ENCODE measurements at regions of chr9 and their contacts with region 1.

Region 1: GRCh38 chr9:78035383-78035993 is 3.9 kb upstream of the GNAQ start:
- DNase-seq: peak; percentile 64
- H3K4me3 Mint-ChIP-seq: no peak overlapping the region
- H3K27ac Mint-ChIP-seq: no peak overlapping the region
- H3K4me1 Mint-ChIP-seq: peaks cover 31% of the 10 kb centered on the region
- H3K27me3 Mint-ChIP-seq: no peaks in the 10 kb centered on the region

Region 2: DNA sequence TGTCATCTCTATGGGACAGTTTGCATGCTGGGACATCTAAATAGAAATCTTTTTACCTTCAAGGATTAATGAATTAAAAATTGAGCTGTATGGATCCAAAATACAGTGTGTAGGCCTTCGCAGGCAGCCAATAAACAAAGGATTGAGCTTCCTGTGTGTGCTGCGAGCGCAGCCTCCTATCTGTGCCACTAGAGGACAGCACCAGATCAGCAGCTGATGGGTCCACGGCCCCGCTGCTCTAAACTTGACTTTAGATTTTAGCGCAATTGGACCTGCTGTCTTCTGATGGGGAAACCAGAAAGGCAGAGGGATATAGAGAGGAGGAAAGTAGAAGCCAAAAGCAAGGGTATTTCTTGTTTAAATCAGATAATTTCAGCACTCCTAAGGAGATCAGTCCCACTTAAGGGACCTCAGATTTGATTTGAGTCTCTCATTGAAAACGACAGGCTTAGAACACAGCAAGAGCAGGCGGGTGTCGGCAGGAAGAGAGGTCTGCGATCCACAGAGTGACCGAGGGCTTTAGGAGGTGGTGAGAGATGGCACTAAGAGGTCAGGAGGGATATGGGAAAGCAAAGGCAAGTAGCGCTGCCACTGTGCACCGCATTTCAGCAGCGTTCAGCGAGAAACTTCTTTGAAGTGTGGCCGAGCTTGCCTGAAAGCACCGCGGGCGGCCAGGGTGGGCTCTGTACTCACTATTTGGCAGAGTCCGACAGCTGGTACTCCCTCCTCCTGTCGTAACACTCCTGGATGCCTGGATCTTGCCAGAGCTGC is 601.6 kb before region 1 on chr9:
- CTCF ChIA-PET with region 1: interaction called, 7 read pairs
- POLR2A ChIA-PET with region 1: no interaction called
- intact Hi-C with region 1: loop called (anchors 2 kb)
- DNase-seq: peak; percentile 65
- H3K4me3 Mint-ChIP-seq: no peak overlapping the region
- H3K27ac Mint-ChIP-seq: no peak overlapping the region
- H3K4me1 Mint-ChIP-seq: peaks cover 3% of the 10 kb centered on the region
- H3K27me3 Mint-ChIP-seq: no peaks in the 10 kb centered on the region

Region 3: DNA sequence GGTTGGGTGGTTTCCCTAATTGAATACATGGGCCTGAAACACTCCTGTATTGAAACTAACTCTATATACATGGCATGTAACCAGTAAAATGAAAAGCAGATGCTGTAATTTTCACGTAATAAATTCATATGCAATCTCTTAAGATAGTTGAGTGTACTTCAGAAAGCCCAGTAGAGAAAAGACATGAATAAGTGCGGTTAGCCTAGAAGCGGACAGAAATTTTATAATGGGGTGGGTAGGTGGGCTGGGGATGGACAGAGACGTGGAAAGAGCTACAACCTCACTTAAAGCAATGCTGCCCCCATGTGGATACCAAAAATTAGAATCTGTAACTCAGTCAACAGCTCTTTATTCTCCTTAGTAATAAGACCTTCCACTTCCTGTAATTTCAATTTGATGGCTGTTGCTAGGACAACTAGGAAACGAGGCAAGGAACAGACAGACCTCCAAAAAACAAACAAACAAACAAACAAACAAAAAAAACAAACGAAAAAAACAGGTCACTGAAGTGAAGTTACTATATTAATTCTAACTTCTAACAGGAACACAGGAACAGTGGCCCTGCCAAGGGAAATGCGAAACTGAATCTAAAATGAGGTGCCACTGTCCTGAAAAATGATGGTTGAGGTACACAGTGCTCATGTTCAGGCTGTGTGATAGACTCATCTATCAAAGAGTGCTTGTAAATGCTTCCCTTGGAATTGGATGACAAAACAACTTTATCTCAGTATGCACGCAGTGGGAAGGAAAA is 284.0 kb before region 1 on chr9:
- CTCF ChIA-PET with region 1: interaction called, 7 read pairs
- POLR2A ChIA-PET with region 1: no interaction called
- intact Hi-C with region 1: loop called (anchors 5 kb)
- DNase-seq: no peak
- H3K4me3 Mint-ChIP-seq: no peak overlapping the region
- H3K27ac Mint-ChIP-seq: no peak overlapping the region
- H3K4me1 Mint-ChIP-seq: peaks cover 21% of the 10 kb centered on the region
- H3K27me3 Mint-ChIP-seq: no peaks in the 10 kb centered on the region

Region 4: DNA sequence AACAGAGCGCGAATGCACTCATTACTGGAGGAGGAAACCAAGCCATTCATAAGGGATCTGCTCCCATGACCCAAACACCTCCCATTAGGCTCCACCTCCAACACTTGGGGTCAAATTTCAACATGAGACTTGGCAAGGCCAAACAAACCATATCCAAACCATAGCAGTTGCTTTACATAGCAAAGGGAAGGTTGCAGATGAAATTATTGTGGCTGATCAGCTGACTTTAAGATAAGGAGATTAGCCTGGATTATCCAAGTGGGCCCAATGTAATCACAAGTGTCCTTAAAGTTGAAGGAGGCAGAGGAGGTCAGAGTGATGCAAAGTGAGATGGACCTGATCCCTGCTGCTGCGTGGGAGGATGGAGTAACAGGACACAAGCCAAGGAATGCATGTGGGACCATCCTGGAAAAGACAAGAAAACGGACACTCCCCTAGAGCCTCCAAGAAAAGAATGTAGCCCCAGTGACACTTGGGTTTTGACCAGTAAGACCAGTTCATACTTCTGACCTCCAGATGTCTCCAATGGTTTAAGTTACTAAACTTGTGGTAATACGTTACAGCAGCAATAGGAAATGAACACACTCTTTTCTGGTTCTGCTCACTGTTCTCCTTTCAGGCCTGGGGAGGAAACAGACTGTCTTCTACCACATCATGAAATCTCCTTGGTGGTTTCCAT is 171.1 kb before region 1 on chr9:
- CTCF ChIA-PET with region 1: interaction called, 11 read pairs
- POLR2A ChIA-PET with region 1: no interaction called
- intact Hi-C with region 1: no loop called
- DNase-seq: no peak
- H3K4me3 Mint-ChIP-seq: no peak overlapping the region
- H3K27ac Mint-ChIP-seq: no peak overlapping the region
- H3K4me1 Mint-ChIP-seq: peaks cover 9% of the 10 kb centered on the region
- H3K27me3 Mint-ChIP-seq: no peaks in the 10 kb centered on the region

Region 5: DNA sequence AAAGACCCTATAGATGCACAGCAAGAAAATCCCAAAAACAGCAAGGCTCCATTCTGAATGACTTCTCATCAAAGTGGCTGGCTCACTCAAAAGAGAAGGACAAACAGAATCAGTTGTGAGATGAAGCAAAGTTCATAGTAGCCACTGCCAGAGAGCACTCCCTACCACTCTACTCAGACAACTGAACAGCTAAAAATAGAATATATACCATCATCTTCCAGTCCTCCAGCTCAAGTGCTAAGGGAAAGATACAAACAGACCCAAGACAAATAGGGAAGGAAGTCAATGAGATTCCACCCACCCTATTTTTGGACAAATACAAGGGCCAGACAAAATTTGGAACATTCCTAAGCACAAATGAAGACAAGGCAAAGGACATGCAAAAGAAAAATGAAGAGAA is 24.4 kb before region 1 on chr9:
- CTCF ChIA-PET with region 1: interaction called, 4 read pairs
- POLR2A ChIA-PET with region 1: no interaction called
- intact Hi-C with region 1: loop called (anchors 2 kb)
- DNase-seq: no peak
- H3K4me3 Mint-ChIP-seq: no peak overlapping the region
- H3K27ac Mint-ChIP-seq: peak overlapping the region; percentile 67
- H3K4me1 Mint-ChIP-seq: peaks cover 63% of the 10 kb centered on the region
- H3K27me3 Mint-ChIP-seq: no peaks in the 10 kb centered on the region

Region 6: GRCh38 chr9:78115073-78115472 is 79.6 kb after region 1 on chr9:
- CTCF ChIA-PET with region 1: interaction called, 12 read pairs
- POLR2A ChIA-PET with region 1: no interaction called
- intact Hi-C with region 1: loop called (anchors 2 kb)
- DNase-seq: no peak
- H3K4me3 Mint-ChIP-seq: no peak overlapping the region
- H3K27ac Mint-ChIP-seq: no peak overlapping the region
- H3K4me1 Mint-ChIP-seq: peaks cover 46% of the 10 kb centered on the region
- H3K27me3 Mint-ChIP-seq: no peaks in the 10 kb centered on the region

Region 7: DNA sequence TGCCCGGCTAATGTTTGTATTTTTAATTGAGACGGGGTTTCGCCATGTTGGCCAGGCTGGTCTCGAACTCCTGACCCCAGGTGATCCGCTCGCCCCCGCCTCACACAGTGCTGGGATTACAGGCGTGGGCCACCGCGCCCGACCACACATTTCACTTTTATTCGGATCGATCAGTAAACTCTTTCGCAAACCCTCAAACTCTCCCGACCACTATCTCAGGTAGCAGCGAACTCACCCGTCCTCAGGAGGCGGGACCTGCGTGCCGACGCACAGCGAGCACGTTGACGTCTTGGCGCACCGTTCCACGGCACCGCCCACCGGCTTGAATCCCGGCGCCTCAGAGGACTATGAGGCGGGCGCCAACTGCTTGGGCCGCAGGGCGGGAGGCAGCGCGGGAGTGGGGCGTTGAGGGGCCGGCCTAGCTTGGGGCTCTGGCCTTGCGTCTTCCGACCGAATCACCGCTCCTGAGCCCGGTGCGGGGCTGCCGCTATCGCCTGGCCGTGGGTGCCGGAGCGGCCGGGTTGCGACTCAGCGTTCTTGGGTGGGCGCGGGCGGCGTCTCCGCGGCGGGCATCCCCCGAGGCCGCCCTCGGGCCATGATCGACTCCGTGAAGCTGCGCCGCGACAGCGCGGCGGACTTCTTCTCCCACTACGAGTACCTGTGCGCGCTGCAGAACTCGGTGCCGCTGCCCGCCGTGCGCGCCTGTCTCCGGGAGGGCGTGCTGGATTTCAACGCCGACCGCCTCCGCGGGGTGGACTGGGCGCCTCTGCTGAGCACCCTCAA is 200.5 kb after region 1 on chr9 and contains the start of gene CEP78:
- CTCF ChIA-PET with region 1: no interaction called
- POLR2A ChIA-PET with region 1: no interaction called
- intact Hi-C with region 1: loop called (anchors 5 kb)
- DNase-seq: peak; percentile 93
- H3K4me3 Mint-ChIP-seq: peak within 1 kb of the TSS; percentile 94
- H3K27ac Mint-ChIP-seq: peak within 1 kb of the TSS; percentile 91
- H3K4me1 Mint-ChIP-seq: peaks cover 31% of the 10 kb centered on the region
- H3K27me3 Mint-ChIP-seq: no peaks in the 10 kb centered on the region
- total RNA-seq, gene CEP78: 40.1 to 42.2 TPM

Region 8: GRCh38 chr9:78357165-78357873 is 321.8 kb after region 1 on chr9:
- CTCF ChIA-PET with region 1: no interaction called
- POLR2A ChIA-PET with region 1: no interaction called
- intact Hi-C with region 1: no loop called
- DNase-seq: no peak
- H3K4me3 Mint-ChIP-seq: no peak overlapping the region
- H3K27ac Mint-ChIP-seq: no peak overlapping the region
- H3K4me1 Mint-ChIP-seq: no peaks in the 10 kb centered on the region
- H3K27me3 Mint-ChIP-seq: no peaks in the 10 kb centered on the region

Measured in activated CD4-positive, alpha-beta memory T cell treated with anti-CD3 and anti-CD28 coated beads for 36 hours (primary cell).